ENCODE measurements at regions of chr6 and their contacts with region 1.

Region 1: DNA sequence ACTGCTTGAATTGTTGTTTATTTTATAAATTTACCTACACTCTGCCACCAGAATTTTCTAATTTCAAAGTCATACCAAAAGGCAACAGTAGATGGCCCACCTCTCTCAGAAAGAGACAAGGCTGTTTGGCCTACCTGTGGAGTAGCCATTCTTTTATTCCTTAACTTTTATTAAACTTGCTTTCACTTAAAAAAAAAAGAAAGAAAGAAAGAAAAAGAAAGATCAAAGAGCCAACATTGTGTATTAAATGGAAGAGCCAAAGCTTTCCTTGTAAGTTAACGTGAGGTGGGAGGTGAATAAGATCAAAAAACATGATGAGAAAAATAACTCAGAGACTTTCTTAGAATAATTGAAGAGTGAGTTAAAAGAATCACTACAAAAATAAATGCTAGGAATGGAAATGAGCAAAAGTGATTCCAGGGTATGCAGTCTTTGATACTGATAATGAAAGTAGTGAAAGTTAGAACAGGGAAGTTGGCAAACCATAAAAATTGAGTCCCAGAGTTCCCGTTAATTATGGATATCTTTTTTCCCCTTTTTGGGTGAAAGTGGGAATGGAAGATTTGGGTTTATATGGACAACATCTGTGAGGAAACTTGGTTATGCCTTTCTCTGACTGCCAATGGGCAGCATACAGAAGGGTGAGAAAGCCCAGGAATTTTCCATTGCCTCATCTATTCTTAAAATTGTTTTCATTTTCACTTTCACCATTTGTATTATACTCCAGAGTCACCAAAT is 35.9 kb upstream of the MYB start:
- DNase-seq: no peak
- ATAC-seq: no peak

Region 2: GRCh38 chr6:135323202-135323668 is 178.0 kb after region 1 on chr6:
- intact Hi-C with region 1: no loop called
- DNase-seq: no peak
- ATAC-seq: no peak

Region 3: GRCh38 chr6:135372758-135373157 is 227.5 kb after region 1 on chr6:
- intact Hi-C with region 1: no loop called
- DNase-seq: no peak
- ATAC-seq: no peak

Region 4: DNA sequence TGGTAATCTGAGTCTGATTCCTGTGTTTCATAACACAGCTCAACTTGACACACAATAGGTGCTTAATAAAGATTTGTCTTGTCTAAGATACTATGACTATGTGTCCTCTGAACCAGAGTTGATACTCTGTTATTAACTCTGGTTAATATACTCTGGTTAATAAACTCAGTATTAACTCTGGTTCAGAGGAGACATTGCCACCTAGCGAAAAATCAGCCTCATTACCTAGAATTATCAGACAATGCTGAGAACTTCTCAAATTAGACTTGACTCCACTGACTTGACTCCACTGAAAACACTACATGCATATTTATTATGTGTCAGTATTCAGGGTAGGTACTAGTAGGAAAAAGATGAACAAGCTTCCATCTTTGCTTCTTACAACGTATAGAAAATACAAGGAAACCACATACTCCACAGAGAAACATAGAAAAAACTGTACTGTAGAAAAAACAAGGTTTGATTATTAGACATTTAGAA is 278.5 kb after region 1 on chr6:
- intact Hi-C with region 1: loop called (anchors 2 kb)
- DNase-seq: no peak
- ATAC-seq: peak; percentile 42